Mammary epithelial cell (primary cell): ENCODE measurements at regions of chr18 and their contacts with region 1.

Region 1: DNA sequence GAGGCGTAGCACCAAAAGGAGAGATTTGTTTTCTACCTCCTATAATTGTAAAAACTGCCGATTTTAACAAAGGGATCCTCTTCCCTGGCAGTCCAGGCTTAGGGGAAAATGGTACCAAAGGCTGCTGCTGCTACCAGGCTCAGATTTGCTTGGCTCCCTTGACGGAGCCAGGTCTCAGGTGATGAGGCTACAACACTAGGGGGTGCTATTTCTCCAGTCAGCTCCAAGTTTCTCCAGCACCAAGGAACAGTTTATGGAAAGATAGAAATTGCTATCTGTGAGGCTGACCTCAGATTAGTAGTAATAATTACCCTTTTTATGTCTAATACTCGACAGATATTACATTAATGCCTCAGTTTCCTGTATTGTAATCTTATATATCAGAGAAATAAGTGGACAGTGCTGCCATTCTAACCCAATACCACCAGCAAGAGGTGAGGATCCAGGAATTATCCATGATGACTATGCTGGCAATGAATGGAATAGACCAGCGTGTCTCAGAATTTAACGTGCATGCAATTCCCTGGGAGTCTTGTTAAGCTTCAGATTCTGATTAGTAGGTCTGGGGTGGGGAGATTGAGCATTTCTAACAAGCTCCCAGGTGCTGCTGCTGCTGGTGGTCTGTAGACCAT is 111.3 kb downstream of the ESCO1 start:
- DNase-seq: peak; percentile 31
- H3K4me3 ChIP-seq: no peak overlapping the region
- H3K27ac ChIP-seq: no peak overlapping the region
- H3K4me1 ChIP-seq: no peaks in the 10 kb centered on the region
- H3K27me3 ChIP-seq: peaks cover 2% of the 10 kb centered on the region
- CTCF ChIP-seq: peak; percentile 86 to 89

Region 2: DNA sequence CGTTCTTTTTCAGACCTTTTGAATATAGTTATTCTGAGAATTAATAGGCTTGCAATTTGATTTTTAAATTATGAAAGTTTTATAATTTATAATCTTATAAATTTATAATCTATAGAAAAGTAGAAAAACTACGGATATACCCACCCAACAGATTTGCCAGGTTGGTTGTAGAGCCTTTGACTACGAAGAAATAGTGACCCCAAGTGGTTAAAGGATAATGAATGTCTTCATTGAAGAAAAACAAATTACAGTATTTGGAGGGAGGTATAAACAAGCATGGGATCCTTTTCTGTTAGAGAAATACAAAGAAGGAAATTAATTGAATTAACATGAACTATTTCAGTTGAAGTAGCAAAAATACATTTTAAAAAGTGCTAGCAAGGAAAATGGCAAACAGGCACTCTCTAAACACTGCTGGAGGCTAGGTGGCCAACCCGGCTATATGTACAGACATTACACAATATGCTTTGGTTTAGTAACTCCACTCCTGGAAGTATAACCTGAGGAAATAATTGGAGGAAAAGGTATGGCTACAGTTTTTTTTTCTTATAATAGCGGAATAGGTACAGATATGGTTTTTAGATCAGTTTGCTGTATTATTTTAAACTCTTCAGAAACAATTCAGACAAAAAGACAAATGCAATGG is 362.2 kb after region 1 on chr18:
- CTCF ChIA-PET with region 1: no interaction called
- dilution Hi-C with region 1: no loop called
- in situ Hi-C with region 1: loop called in 1 of 2 experiments (anchors 25 kb)
- intact Hi-C with region 1: loop called (anchors 10 kb)
- DNase-seq: no peak
- H3K4me3 ChIP-seq: no peak overlapping the region
- H3K27ac ChIP-seq: no peak overlapping the region
- H3K4me1 ChIP-seq: no peaks in the 10 kb centered on the region
- H3K27me3 ChIP-seq: no peaks in the 10 kb centered on the region
- CTCF ChIP-seq: peak in 1 of 2 donors; percentile 41